Common myeloid progenitor, CD34-positive (primary cell): ENCODE measurements at regions of chr12 and their contacts with region 1.

Region 1: DNA sequence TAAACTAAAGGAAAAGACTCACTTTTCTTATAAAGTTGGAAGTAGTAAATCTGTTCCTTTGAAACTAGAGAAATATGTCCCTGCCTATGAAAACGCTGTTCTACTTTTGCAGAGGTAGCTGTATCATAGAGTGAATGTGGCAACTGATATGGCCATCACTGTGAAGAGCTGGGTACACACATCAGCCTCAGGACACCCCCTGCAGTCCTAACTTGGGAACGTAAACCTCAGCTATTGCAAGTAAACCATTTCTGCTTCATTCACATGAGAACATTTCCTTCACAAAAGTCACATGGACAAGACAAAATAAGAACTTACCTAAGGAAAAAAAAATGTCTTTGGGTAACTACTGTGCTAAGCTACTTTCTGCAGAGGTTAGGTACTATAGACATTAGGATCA is 233.3 kb upstream of the PPFIA2 start:
- DNase-seq: peak; percentile 52 to 77 (median 71)
- H3K4me3 ChIP-seq: no peak overlapping the region
- H3K27ac ChIP-seq: no peak overlapping the region
- H3K4me1 ChIP-seq: no peaks in the 10 kb centered on the region
- H3K27me3 ChIP-seq: peaks cover 0 to 3% (median 0%) of the 10 kb centered on the region in 5 experiments

Region 2: DNA sequence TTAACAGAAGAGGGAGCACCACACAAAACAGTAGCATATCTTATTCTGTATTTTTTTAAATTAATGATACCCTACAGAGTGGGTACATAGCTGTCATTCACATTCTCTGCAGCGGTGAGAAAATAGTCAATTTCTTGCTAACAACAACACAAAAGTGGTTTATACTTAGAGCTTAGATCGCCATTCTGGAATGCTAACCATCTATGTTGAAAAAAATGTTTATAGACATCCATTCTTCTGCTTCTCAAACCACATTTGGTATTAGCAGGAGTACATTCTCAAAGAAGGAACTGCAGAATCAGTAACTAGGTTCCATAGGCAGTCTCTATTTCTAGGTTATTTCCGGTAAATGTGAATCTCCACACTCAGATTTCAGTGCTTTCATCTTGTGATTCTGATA is 419.2 kb before region 1 on chr12:
- CTCF ChIA-PET with region 1: no interaction called
- POLR2A ChIA-PET with region 1: no interaction called
- DNase-seq: no peak
- H3K4me3 ChIP-seq: no peak overlapping the region
- H3K27ac ChIP-seq: no peak overlapping the region
- H3K4me1 ChIP-seq: no peaks in the 10 kb centered on the region
- H3K27me3 ChIP-seq: no peaks in the 10 kb centered on the region

Region 3: DNA sequence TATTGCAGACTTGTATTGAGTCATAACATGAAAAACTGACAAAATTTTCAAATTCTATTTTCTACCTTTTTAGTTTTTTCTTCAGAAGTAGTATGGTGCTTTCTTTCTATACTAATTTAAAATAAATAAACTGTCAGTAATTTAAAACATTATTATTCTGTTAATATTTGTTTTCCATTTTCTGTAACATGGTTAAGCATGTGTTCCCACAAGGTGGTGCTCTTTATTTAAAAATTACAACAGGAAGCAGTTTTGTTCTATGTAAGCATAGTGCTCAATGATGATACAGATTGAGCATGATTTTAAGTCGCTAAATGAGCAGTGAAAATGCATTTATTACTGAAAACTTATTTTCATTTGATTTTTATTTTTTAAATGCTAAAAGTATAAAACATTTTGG is 348.0 kb before region 1 on chr12:
- CTCF ChIA-PET with region 1: interaction called, 23 read pairs
- POLR2A ChIA-PET with region 1: no interaction called
- DNase-seq: peak; percentile 43 to 75 (median 73)
- H3K4me3 ChIP-seq: no peak overlapping the region
- H3K27ac ChIP-seq: no peak overlapping the region
- H3K4me1 ChIP-seq: no peaks in the 10 kb centered on the region
- H3K27me3 ChIP-seq: peaks cover 0 to 16% (median 0%) of the 10 kb centered on the region in 5 experiments